ENCODE measurements at regions of chr3 and their contacts with region 1.

Region 1: GRCh38 chr3:100159331-100160153 is 45.2 kb upstream of the FILIP1L start:
- DNase-seq: peak; percentile 94
- H3K4me3 ChIP-seq: peak overlapping the region in 2 of 3 experiments; percentile 14 to 43
- H3K27ac ChIP-seq: peak overlapping the region; percentile 75
- H3K4me1 ChIP-seq: peaks cover 41% of the 10 kb centered on the region
- H3K27me3 ChIP-seq: no peaks in the 10 kb centered on the region
- CTCF ChIP-seq: no peak
- POLR2A ChIP-seq: peak; percentile 22

Region 2: DNA sequence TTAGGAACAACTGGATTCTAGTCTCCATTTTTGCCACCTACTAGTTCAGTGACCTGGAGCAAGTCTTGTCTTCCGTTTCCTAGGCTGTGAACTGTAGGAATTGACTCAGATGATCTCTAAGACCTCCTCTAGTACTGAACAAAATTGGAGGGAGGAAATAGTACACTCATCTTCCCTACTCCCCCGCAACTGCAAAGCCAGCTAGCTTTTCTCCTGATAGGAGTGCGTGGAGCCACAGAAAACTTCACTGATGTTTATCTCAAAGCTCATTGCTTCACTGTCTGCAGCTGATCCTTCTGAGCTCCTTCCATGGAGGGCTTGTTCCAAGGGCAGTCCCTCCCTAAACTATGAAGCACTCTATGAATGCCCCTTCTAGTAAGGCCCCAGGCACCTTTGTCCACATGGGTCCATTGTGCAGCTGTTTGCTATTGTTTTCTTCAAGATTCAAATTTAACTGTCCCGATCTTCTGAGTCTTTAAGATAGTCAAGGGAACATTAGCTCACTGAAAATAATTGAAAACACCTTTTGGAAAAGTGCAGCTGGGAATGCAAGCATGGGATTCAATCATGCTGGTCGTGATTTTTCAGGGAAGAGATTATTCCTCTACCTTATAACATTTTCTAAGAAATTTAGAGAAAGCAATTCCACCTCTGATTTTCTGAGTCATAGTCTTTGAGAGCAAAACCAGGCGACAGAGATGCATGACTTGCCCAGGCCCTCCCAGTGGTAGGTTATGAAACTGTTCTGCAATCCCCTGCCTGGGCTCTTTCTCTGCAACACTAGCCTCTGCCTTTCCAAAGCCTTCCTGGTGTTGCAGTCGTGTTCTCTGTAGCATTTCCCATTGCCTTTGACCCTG is 69.5 kb before region 1 on chr3:
- CTCF ChIA-PET with region 1: no interaction called
- POLR2A ChIA-PET with region 1: no interaction called
- dilution Hi-C with region 1: no loop called
- intact Hi-C with region 1: loop called (anchors 5 kb)
- DNase-seq: no peak
- H3K4me3 ChIP-seq: no peak overlapping the region
- H3K27ac ChIP-seq: no peak overlapping the region
- H3K4me1 ChIP-seq: peaks cover 5% of the 10 kb centered on the region
- H3K27me3 ChIP-seq: no peaks in the 10 kb centered on the region
- CTCF ChIP-seq: peak; percentile 11 to 55
- POLR2A ChIP-seq: no peak

Region 3: GRCh38 chr3:100210772-100211135 is 51.2 kb after region 1 on chr3:
- CTCF ChIA-PET with region 1: interaction called, 3 read pairs
- POLR2A ChIA-PET with region 1: no interaction called
- dilution Hi-C with region 1: no loop called
- intact Hi-C with region 1: loop called (anchors 1 kb)
- DNase-seq: peak; percentile 83
- H3K4me3 ChIP-seq: no peak overlapping the region
- H3K27ac ChIP-seq: no peak overlapping the region
- H3K4me1 ChIP-seq: no peaks in the 10 kb centered on the region
- H3K27me3 ChIP-seq: peaks cover 1 to 2% of the 10 kb centered on the region in 2 experiments
- CTCF ChIP-seq: no peak
- POLR2A ChIP-seq: no peak

Measured in endothelial cell of umbilical vein (primary cell).